ENCODE measurements at regions of chr4 and their contacts with region 1.

Region 1: GRCh38 chr4:151013944-151014343 is 1.1 kb downstream of the LRBA start:
- DNase-seq: no peak
- ATAC-seq: no peak
- H3K4me3 ChIP-seq: peak overlapping the region; percentile 97 to 100
- H3K4me3 Mint-ChIP-seq: peak overlapping the region; percentile 95 to 100 (median 100)
- H3K27ac ChIP-seq: no peak overlapping the region
- H3K27ac Mint-ChIP-seq: peak overlapping the region; percentile 98 to 99
- H3K4me1 ChIP-seq: peaks cover 18 to 22% of the 10 kb centered on the region in 2 experiments
- H3K4me1 Mint-ChIP-seq: peaks cover 26 to 35% (median 30%) of the 10 kb centered on the region in 3 donors
- H3K27me3 ChIP-seq: no peaks in the 10 kb centered on the region
- H3K27me3 Mint-ChIP-seq: no peaks in the 10 kb centered on the region

Region 2: DNA sequence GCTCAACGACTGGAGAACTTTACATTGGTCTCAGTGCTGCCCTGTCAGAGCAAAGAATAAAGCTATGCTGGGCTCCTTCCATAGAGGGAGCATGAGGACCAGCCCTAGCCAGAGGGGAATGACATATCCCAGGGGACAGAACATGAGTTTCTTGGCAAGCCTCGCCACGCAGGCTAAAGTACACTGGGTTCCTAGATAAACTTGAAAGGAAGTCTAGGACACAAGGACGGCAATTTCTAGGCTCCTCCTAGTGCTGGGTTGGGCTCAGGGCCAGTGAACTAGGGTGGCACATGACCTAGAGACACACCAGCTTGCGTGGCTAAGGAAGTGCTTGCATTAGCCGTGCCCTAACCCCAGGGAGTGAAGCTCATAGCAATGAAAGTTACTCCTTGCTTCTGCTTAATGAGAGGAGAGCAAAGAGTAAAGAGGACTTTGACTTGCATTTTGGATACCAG is 291.0 kb before region 1 on chr4:
- CTCF ChIA-PET with region 1: interaction called in 1 of 2 experiments, 13 read pairs
- POLR2A ChIA-PET with region 1: no interaction called
- DNase-seq: no peak
- ATAC-seq: no peak
- H3K4me3 ChIP-seq: no peak overlapping the region
- H3K4me3 Mint-ChIP-seq: no peak overlapping the region
- H3K27ac ChIP-seq: no peak overlapping the region
- H3K27ac Mint-ChIP-seq: no peak overlapping the region
- H3K4me1 ChIP-seq: no peaks in the 10 kb centered on the region
- H3K4me1 Mint-ChIP-seq: peaks cover 0 to 9% (median 7%) of the 10 kb centered on the region in 3 donors
- H3K27me3 ChIP-seq: no peaks in the 10 kb centered on the region
- H3K27me3 Mint-ChIP-seq: no peaks in the 10 kb centered on the region

Measured in T-cell (primary cell).